Heart right ventricle (tissue), 16 donors: ENCODE measurements at regions of chr10 and their contacts with region 1.

Region 1: DNA sequence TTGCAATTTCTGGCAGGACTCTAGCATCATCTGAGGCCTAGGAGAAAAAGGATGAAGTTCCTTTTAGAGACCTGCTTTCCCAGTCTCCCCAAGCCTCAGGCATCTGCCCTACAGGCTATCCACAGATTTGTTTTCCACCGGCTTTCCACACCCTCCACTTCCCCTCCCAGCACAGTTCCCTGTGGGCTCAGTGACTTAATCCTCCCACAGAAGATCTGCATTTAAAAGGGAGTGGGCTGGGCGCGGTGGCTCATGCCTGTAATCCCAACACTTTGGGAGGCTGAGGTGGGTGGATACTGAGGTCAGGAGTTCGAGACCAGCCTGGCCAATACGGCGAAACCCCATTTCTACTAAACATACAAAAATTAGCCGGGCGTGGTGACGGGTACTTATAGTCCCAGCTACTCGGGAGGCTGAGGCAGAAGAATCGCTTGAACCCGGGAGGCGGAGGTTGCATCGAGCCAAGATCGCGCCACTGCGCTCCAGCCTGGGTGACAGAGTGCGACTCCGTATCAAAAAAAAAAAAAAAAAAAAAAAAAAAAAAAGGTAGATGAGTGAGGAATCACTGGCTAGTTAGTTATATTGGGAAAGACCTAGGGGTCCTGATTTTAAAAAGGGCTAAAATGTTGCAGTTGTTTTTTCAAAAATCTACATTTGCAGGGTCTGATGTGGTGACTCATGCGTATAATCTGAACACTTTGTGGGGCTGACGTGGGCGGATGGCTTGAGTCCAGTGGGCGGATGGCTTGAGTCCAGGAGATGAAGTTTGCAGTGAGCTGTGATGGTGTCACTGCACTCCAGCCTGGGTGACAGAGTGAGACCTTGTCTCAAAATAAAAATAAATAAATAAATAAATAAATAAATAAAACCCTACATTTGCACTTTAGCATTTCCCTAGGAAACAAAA is 119.5 kb downstream of the BAMBI start:
- DNase-seq: peak; percentile 72 to 75
- ATAC-seq: peak; percentile 64 to 92 (median 88)
- H3K4me3 ChIP-seq: no peak overlapping the region
- H3K27ac ChIP-seq: peak overlapping the region in 1 of 10 donors; percentile 9
- H3K4me1 ChIP-seq: peaks cover 0 to 8% (median 0%) of the 10 kb centered on the region in 9 donors
- H3K27me3 ChIP-seq: no peaks in the 10 kb centered on the region
- CTCF ChIP-seq: no peak

Region 2: GRCh38 chr10:28845009-28845682 is 48.3 kb after region 1 on chr10:
- intact Hi-C with region 1: loop called in 1 of 10 experiments (anchors 5 kb)
- DNase-seq: no peak
- ATAC-seq: no peak
- H3K4me3 ChIP-seq: no peak overlapping the region
- H3K27ac ChIP-seq: no peak overlapping the region
- H3K4me1 ChIP-seq: peaks cover 0 to 23% (median 14%) of the 10 kb centered on the region in 9 donors
- H3K27me3 ChIP-seq: no peaks in the 10 kb centered on the region
- CTCF ChIP-seq: no peak

Region 3: GRCh38 chr10:28991326-28992270 is 194.7 kb after region 1 on chr10:
- intact Hi-C with region 1: loop called in 1 of 10 experiments (anchors 5 kb)
- DNase-seq: peak; percentile 32 to 35
- ATAC-seq: peak; percentile 57 to 97 (median 86)
- H3K4me3 ChIP-seq: no peak overlapping the region
- H3K27ac ChIP-seq: peak overlapping the region in 4 of 10 donors; percentile 39 to 68 (median 44)
- H3K4me1 ChIP-seq: peaks cover 0 to 9% (median 0%) of the 10 kb centered on the region in 9 donors
- H3K27me3 ChIP-seq: no peaks in the 10 kb centered on the region
- CTCF ChIP-seq: peak; percentile 30 to 80 (median 68)